ENCODE measurements at regions of chr1 and their contacts with region 1.

Region 1: GRCh38 chr1:213061263-213061662 is 10.2 kb downstream of the RPS6KC1 start:
- DNase-seq: no peak
- ATAC-seq: no peak; the same call in 1 of the 2 replicates
- H3K4me3 ChIP-seq: no peak overlapping the region
- H3K27ac ChIP-seq: no peak overlapping the region
- H3K4me1 ChIP-seq: no peaks in the 10 kb centered on the region
- H3K27me3 ChIP-seq: no peaks in the 10 kb centered on the region
- CTCF ChIP-seq: peak; percentile 30; the same call in 1 of the 2 replicates

Region 2: GRCh38 chr1:213095467-213095866 is 34.2 kb after region 1 on chr1:
- CTCF ChIA-PET with region 1: interaction called, 11 read pairs
- POLR2A ChIA-PET with region 1: no interaction called
- in situ Hi-C with region 1: no loop called
- intact Hi-C with region 1: no loop called
- DNase-seq: no peak
- ATAC-seq: no peak
- H3K4me3 ChIP-seq: no peak overlapping the region
- H3K27ac ChIP-seq: no peak overlapping the region
- H3K4me1 ChIP-seq: no peaks in the 10 kb centered on the region
- H3K27me3 ChIP-seq: no peaks in the 10 kb centered on the region
- CTCF ChIP-seq: no peak